ENCODE measurements at regions of chr1 and their contacts with region 1.

Region 1: GRCh38 chr1:161225534-161226319 is at the start of gene TOMM40L:
- DNase-seq: peak; percentile 95
- H3K4me3 Mint-ChIP-seq: peak within 1 kb of the TSS; percentile 100
- H3K27ac Mint-ChIP-seq: peak within 1 kb of the TSS; percentile 98
- H3K4me1 Mint-ChIP-seq: peaks cover 36% of the 10 kb centered on the region
- H3K27me3 Mint-ChIP-seq: no peaks in the 10 kb centered on the region
- total RNA-seq, gene TOMM40L: 13.2 to 14.3 TPM

Region 2: DNA sequence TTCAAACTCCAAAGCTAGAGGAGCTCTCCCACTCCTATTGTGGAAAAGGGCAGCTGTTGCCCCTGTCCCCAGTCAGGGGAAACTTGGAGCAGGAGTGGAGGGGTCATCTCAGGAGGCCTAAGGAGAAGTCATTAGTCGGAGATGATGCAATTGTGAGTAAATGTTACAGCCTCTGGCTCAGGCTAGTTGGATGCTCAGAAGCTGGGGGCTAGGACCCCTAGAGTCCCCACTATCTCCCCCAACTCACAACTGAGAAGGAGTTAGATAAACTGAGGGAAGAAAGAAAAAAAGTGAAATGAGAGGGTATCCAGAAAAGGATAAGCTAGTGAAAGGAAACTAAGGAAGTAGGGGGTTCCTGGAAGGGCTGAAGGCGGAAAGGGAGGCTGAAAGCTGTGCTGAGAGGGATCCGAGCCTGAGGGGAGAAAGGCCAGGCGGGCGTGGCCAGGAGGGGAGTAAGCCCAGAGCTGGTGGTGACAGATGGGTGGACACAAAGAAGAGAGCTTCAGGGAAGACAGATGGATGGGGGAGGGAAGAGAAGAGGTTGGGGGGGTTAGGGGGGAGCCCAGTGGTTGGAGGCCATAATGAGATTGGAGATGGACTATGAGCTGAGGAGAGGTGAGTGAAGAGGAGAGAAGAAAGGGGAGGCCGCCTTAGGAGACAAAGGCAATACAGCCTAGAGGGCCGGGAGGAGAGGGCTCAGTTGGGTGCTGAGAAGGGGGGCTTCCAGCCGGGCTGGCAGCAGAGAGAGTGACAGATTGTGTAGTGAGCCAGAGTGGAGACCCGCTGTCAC is 863.4 kb before region 1 on chr1:
- CTCF ChIA-PET with region 1: no interaction called
- intact Hi-C with region 1: no loop called
- DNase-seq: no peak
- H3K4me3 Mint-ChIP-seq: no peak overlapping the region
- H3K27ac Mint-ChIP-seq: peak overlapping the region; percentile 43
- H3K4me1 Mint-ChIP-seq: peaks cover 5% of the 10 kb centered on the region
- H3K27me3 Mint-ChIP-seq: no peaks in the 10 kb centered on the region

Region 3: DNA sequence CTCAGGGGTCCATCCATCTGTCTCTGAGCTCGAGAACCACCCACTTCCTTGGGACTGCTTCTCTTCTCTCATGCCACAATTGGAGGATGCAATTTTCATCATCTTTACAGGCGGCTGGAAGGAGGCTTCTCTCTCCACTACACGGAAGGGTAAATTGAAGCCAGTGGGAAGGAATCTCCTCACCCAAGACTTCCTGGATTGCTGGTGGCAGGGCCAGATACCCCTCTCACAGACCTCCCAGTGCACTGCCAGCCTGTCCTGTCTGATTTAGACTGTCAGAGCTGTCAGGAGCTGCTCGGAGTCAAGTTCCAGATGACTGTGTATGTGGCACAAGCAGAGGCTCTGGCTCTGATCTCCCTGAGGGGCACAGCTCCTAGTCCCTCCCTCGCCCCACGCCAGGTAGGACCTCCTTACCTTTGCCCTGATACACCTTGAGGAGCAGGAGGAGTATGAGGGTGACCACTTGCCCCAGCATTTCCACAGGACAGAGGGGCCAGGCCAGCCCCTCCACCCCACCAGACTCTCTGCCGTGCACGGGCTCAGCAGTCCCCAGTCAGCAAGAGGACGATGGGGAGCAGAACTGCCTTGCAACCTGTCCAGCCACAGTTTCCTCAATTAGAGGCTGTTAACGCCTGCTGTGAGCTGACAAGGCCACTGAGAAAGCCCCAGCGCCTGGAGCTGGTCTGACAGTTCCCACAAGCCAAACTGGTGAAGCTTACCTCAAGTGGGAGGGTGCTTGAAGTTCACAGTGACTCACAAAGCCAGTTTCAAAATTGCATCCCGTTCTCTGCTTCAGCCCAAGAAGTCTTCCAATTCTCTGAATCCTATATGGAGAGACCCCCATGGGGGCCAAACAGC is 363.3 kb before region 1 on chr1 and contains the start of gene CD244:
- CTCF ChIA-PET with region 1: no interaction called
- intact Hi-C with region 1: no loop called
- DNase-seq: peak; percentile 76
- H3K4me3 Mint-ChIP-seq: no peak within 1 kb of the TSS
- H3K27ac Mint-ChIP-seq: no peak within 1 kb of the TSS
- H3K4me1 Mint-ChIP-seq: peaks cover 10% of the 10 kb centered on the region
- H3K27me3 Mint-ChIP-seq: no peaks in the 10 kb centered on the region
- total RNA-seq, gene CD244: 0.15 TPM in 1 of 2 experiments, not detected in the other

Region 4: GRCh38 chr1:161165742-161166668 is 59.7 kb before region 1 on chr1 and contains the start of gene PPOX:
- CTCF ChIA-PET with region 1: interaction called, 8 read pairs
- intact Hi-C with region 1: loop called (anchors 1 kb)
- DNase-seq: peak; percentile 97
- H3K4me3 Mint-ChIP-seq: peak within 1 kb of the TSS; percentile 87
- H3K27ac Mint-ChIP-seq: peak within 1 kb of the TSS; percentile 87
- H3K4me1 Mint-ChIP-seq: peaks cover 49% of the 10 kb centered on the region
- H3K27me3 Mint-ChIP-seq: no peaks in the 10 kb centered on the region
- total RNA-seq, gene PPOX: 24.9 to 26.0 TPM

Region 5: GRCh38 chr1:161201828-161202725 is 23.6 kb before region 1 on chr1 and contains the start of gene NDUFS2:
- CTCF ChIA-PET with region 1: interaction called, 196 read pairs
- intact Hi-C with region 1: loop called (anchors 1 kb)
- DNase-seq: peak; percentile 99
- H3K4me3 Mint-ChIP-seq: peak within 1 kb of the TSS; percentile 92
- H3K27ac Mint-ChIP-seq: peak within 1 kb of the TSS; percentile 89
- H3K4me1 Mint-ChIP-seq: peaks cover 75% of the 10 kb centered on the region
- H3K27me3 Mint-ChIP-seq: no peaks in the 10 kb centered on the region
- total RNA-seq, gene NDUFS2: 126 to 130 TPM

Region 6: DNA sequence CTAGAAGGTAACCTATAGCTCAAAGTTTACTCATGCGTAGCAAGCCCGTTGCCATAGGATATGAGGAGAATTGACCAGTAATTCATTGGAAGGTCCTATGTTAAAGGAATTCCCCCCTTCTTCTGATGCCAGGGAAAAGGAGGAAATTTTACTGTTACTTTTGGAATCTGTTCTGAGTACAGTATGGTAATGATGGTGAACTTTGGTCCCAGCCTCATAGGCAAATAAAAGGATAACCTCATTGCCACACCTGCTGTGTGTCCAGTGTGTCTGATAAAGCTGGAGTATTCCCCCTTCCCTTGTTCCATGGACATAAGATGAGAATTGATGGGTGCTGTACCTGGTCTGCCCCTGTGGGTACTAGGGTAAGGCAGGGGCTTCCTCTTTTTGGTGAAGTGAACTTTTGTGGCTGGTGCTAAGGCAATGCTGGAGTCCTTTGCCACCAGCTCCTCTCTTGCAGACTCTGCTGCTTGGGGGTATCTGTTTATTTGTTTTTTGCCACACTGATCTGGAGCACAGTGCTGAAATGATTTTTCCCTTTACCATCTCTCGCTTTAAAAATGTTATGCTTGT is 61.8 kb after region 1 on chr1:
- CTCF ChIA-PET with region 1: interaction called, 82 read pairs
- intact Hi-C with region 1: loop called (anchors 1 kb)
- DNase-seq: no peak
- H3K4me3 Mint-ChIP-seq: no peak overlapping the region
- H3K27ac Mint-ChIP-seq: no peak overlapping the region
- H3K4me1 Mint-ChIP-seq: no peaks in the 10 kb centered on the region
- H3K27me3 Mint-ChIP-seq: no peaks in the 10 kb centered on the region

Region 7: GRCh38 chr1:161314201-161314981 is 88.7 kb after region 1 on chr1 and contains the start of gene SDHC:
- CTCF ChIA-PET with region 1: interaction called, 3 read pairs
- intact Hi-C with region 1: loop called (anchors 1 kb)
- DNase-seq: peak; percentile 89
- H3K4me3 Mint-ChIP-seq: peak within 1 kb of the TSS; percentile 97
- H3K27ac Mint-ChIP-seq: peak within 1 kb of the TSS; percentile 92
- H3K4me1 Mint-ChIP-seq: peaks cover 21% of the 10 kb centered on the region
- H3K27me3 Mint-ChIP-seq: no peaks in the 10 kb centered on the region
- total RNA-seq, gene SDHC: 201 TPM

Region 8: DNA sequence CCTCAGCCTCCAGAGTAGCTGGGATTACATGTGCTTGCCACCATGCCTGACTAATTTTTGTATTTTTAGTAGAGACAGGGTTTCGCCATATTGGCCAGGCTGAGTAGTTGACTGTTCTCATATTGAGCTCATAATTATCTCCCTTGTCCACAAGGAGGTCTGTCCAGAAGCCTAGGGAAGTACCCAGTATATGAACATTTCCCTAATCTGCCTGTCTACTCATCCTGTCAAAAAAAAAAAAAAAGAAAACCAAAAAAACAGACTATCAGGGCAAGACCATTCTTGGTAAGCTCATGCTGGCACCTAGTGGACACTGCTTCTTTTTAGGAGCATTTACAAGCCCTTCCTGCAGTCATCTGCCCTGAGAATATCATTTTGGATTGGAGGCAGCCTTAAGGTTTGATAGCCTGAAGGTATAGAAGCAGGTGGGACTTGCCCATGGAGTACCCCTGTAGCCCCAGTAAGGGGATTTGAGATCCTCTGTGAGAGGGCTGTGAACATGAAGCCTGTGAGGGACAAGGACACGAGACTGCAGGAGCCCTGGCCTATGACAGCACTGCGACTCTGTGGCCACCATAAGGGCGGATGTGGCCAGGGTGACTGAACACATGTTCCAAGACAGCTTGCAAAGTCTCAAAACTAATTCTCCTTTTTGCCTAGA is 513.0 kb after region 1 on chr1:
- CTCF ChIA-PET with region 1: no interaction called
- intact Hi-C with region 1: loop called (anchors 2 kb)
- DNase-seq: peak; percentile 67
- H3K4me3 Mint-ChIP-seq: no peak overlapping the region
- H3K27ac Mint-ChIP-seq: no peak overlapping the region
- H3K4me1 Mint-ChIP-seq: peaks cover 19% of the 10 kb centered on the region
- H3K27me3 Mint-ChIP-seq: no peaks in the 10 kb centered on the region

Measured in activated naive CD4-positive, alpha-beta T cell treated with anti-CD3 and anti-CD28 coated beads for 36 hours (primary cell).